ENCODE measurements at regions of chr3 and their contacts with region 1.

Region 1: GRCh38 chr3:52056968-52057805 is 816 bp upstream of the DUSP7 start:
- DNase-seq: peak; percentile 96
- ATAC-seq: peak; percentile 75
- H3K4me3 Mint-ChIP-seq: peak overlapping the region; percentile 86
- H3K27ac Mint-ChIP-seq: peak overlapping the region; percentile 85
- H3K4me1 Mint-ChIP-seq: peaks cover 29% of the 10 kb centered on the region
- H3K27me3 Mint-ChIP-seq: no peaks in the 10 kb centered on the region

Region 2: GRCh38 chr3:51953445-51953844 is 103.7 kb before region 1 on chr3:
- POLR2A ChIA-PET with region 1: no interaction called
- DNase-seq: no peak
- ATAC-seq: no peak
- H3K4me3 Mint-ChIP-seq: no peak overlapping the region
- H3K27ac Mint-ChIP-seq: no peak overlapping the region
- H3K4me1 Mint-ChIP-seq: peaks cover 3% of the 10 kb centered on the region
- H3K27me3 Mint-ChIP-seq: peaks cover 40% of the 10 kb centered on the region

Region 3: GRCh38 chr3:52154117-52155094 is 97.2 kb after region 1 on chr3 and contains the start of gene POC1A:
- POLR2A ChIA-PET with region 1: interaction called, 18 read pairs
- DNase-seq: peak; percentile 93
- ATAC-seq: peak; percentile 93
- H3K4me3 Mint-ChIP-seq: peak within 1 kb of the TSS; percentile 94
- H3K27ac Mint-ChIP-seq: peak within 1 kb of the TSS; percentile 93
- H3K4me1 Mint-ChIP-seq: peaks cover 22% of the 10 kb centered on the region
- H3K27me3 Mint-ChIP-seq: peaks cover 3% of the 10 kb centered on the region
- total RNA-seq, gene POC1A: 20.8 to 22.4 TPM